ENCODE measurements at regions of chr2 and their contacts with region 1.

Region 1: GRCh38 chr2:193584522-193584938 is 1389.8 kb upstream of the TMEFF2 start:
- DNase-seq: peak; percentile 15
- H3K4me3 Mint-ChIP-seq: no peak overlapping the region
- H3K27ac Mint-ChIP-seq: no peak overlapping the region
- H3K4me1 Mint-ChIP-seq: peaks cover 37% of the 10 kb centered on the region
- H3K27me3 Mint-ChIP-seq: no peaks in the 10 kb centered on the region
- CTCF ChIP-seq: peak; percentile 52

Region 2: GRCh38 chr2:192749606-192750200 is 834.8 kb before region 1 on chr2:
- CTCF ChIA-PET with region 1: interaction called, 12 read pairs
- intact Hi-C with region 1: loop called (anchors 2 kb)
- DNase-seq: no peak
- H3K4me3 Mint-ChIP-seq: no peak overlapping the region
- H3K27ac Mint-ChIP-seq: no peak overlapping the region
- H3K4me1 Mint-ChIP-seq: no peaks in the 10 kb centered on the region
- H3K27me3 Mint-ChIP-seq: no peaks in the 10 kb centered on the region
- CTCF ChIP-seq: peak; percentile 30

Region 3: GRCh38 chr2:193187816-193188215 is 396.7 kb before region 1 on chr2:
- CTCF ChIA-PET with region 1: interaction called, 4 read pairs
- intact Hi-C with region 1: loop called (anchors 10 kb)
- DNase-seq: no peak
- H3K4me3 Mint-ChIP-seq: peak overlapping the region; percentile 62
- H3K27ac Mint-ChIP-seq: peak overlapping the region; percentile 93
- H3K4me1 Mint-ChIP-seq: peaks cover 12% of the 10 kb centered on the region
- H3K27me3 Mint-ChIP-seq: no peaks in the 10 kb centered on the region
- CTCF ChIP-seq: no peak

Region 4: GRCh38 chr2:193348055-193348454 is 236.5 kb before region 1 on chr2:
- CTCF ChIA-PET with region 1: no interaction called
- intact Hi-C with region 1: loop called (anchors 10 kb)
- DNase-seq: no peak
- H3K4me3 Mint-ChIP-seq: peak overlapping the region; percentile 49
- H3K27ac Mint-ChIP-seq: peak overlapping the region; percentile 34
- H3K4me1 Mint-ChIP-seq: peaks cover 7% of the 10 kb centered on the region
- H3K27me3 Mint-ChIP-seq: no peaks in the 10 kb centered on the region
- CTCF ChIP-seq: no peak

Region 5: DNA sequence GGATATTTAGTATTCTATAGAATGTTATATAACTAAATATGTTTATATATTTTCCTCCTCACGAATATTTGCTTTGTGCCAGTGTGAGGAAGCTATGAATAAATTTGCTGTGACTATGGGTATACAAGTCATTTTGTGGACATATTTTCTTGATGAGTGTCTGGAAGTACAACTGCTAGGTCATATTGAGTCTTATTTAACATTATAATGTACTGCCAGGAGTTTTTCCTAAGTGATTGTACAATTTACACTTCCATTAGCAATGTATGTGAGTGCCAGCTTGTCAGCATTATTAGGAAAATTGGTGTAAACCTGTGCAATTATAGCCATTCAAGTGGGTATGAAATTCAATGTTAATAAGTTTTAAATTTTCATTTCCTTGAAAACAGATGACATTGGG is 60.9 kb before region 1 on chr2:
- CTCF ChIA-PET with region 1: no interaction called
- intact Hi-C with region 1: loop called (anchors 5 kb)
- DNase-seq: no peak
- H3K4me3 Mint-ChIP-seq: no peak overlapping the region
- H3K27ac Mint-ChIP-seq: no peak overlapping the region
- H3K4me1 Mint-ChIP-seq: peaks cover 21% of the 10 kb centered on the region
- H3K27me3 Mint-ChIP-seq: no peaks in the 10 kb centered on the region
- CTCF ChIP-seq: no peak